PC-3 (cell line): ENCODE measurements at regions of chr12 and their contacts with region 1.

Region 1: GRCh38 chr12:76037130-76038103 is 5.8 kb upstream of the PHLDA1 start:
- DNase-seq: peak; percentile 85
- ATAC-seq: peak; percentile 51
- H3K4me3 ChIP-seq: peak overlapping the region; percentile 15; the same call in 1 of the 2 replicates
- H3K27ac ChIP-seq: peak overlapping the region; percentile 29
- H3K4me1 ChIP-seq: peaks cover 42% of the 10 kb centered on the region
- H3K27me3 ChIP-seq: no peaks in the 10 kb centered on the region
- CTCF ChIP-seq: peak; percentile 91

Region 2: DNA sequence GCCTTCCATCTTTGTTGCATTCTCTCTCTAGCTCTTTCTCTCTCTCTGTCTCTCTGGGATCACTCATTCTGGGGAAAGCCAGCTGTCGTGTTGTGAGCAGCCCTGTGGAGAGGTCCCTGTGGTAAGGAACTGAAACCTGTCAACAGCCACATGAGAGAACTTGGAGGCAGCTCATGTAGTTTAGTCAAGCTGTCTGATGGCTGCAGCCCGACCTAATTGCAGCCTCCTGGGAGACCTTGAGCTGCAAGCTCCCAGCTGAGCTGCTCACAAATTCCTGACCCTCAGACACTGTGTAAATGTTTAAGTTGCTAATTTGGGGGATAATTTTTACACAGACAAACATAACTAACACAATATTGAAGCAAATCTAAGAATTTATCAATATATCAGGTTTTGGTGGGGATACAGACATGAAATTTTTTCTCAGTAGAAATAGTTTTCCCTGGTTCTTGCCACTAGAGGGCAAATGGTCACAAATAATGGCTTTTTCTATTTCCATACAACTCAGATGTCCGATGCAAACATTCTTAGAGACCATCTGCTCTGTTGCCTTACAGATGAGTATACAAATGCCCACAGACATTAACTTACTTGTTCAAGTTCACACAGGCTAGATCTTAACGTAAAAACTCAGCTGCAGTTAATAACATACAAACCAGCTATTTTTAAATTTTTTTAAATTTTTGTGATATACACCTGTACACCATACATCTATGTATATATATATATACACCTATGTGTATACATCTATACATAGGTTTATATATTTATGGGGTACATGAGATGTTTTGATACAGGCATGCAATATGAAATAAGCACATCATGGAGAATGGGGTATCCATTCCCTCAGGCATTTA is 510.5 kb before region 1 on chr12:
- CTCF ChIA-PET with region 1: interaction called, 3 read pairs
- POLR2A ChIA-PET with region 1: no interaction called
- intact Hi-C with region 1: loop called (anchors 1 kb)
- DNase-seq: peak; percentile 75
- ATAC-seq: peak; percentile 76
- H3K4me3 ChIP-seq: no peak overlapping the region
- H3K27ac ChIP-seq: no peak overlapping the region
- H3K4me1 ChIP-seq: no peaks in the 10 kb centered on the region; the same call in 1 of the 2 replicates
- H3K27me3 ChIP-seq: no peaks in the 10 kb centered on the region
- CTCF ChIP-seq: peak; percentile 87

Region 3: GRCh38 chr12:75623631-75624118 is 413.7 kb before region 1 on chr12:
- CTCF ChIA-PET with region 1: no interaction called
- POLR2A ChIA-PET with region 1: no interaction called
- intact Hi-C with region 1: loop called (anchors 5 kb)
- DNase-seq: peak; percentile 54
- ATAC-seq: peak; percentile 84
- H3K4me3 ChIP-seq: no peak overlapping the region
- H3K27ac ChIP-seq: no peak overlapping the region
- H3K4me1 ChIP-seq: peaks cover 10% of the 10 kb centered on the region; the same call in 1 of the 2 replicates
- H3K27me3 ChIP-seq: no peaks in the 10 kb centered on the region
- CTCF ChIP-seq: peak; percentile 62

Region 4: GRCh38 chr12:75635606-75636410 is 401.6 kb before region 1 on chr12:
- CTCF ChIA-PET with region 1: no interaction called
- POLR2A ChIA-PET with region 1: interaction called, 3 read pairs
- intact Hi-C with region 1: loop called (anchors 5 kb)
- DNase-seq: peak; percentile 85
- ATAC-seq: peak; percentile 96
- H3K4me3 ChIP-seq: no peak overlapping the region
- H3K27ac ChIP-seq: peak overlapping the region; percentile 78
- H3K4me1 ChIP-seq: peaks cover 30% of the 10 kb centered on the region
- H3K27me3 ChIP-seq: no peaks in the 10 kb centered on the region
- CTCF ChIP-seq: no peak

Region 5: GRCh38 chr12:75722714-75723200 is 314.7 kb before region 1 on chr12:
- CTCF ChIA-PET with region 1: no interaction called
- POLR2A ChIA-PET with region 1: no interaction called
- intact Hi-C with region 1: loop called (anchors 5 kb)
- DNase-seq: peak; percentile 88
- ATAC-seq: peak; percentile 37
- H3K4me3 ChIP-seq: no peak overlapping the region
- H3K27ac ChIP-seq: peak overlapping the region; percentile 75
- H3K4me1 ChIP-seq: peaks cover 55% of the 10 kb centered on the region
- H3K27me3 ChIP-seq: no peaks in the 10 kb centered on the region
- CTCF ChIP-seq: no peak

Region 6: DNA sequence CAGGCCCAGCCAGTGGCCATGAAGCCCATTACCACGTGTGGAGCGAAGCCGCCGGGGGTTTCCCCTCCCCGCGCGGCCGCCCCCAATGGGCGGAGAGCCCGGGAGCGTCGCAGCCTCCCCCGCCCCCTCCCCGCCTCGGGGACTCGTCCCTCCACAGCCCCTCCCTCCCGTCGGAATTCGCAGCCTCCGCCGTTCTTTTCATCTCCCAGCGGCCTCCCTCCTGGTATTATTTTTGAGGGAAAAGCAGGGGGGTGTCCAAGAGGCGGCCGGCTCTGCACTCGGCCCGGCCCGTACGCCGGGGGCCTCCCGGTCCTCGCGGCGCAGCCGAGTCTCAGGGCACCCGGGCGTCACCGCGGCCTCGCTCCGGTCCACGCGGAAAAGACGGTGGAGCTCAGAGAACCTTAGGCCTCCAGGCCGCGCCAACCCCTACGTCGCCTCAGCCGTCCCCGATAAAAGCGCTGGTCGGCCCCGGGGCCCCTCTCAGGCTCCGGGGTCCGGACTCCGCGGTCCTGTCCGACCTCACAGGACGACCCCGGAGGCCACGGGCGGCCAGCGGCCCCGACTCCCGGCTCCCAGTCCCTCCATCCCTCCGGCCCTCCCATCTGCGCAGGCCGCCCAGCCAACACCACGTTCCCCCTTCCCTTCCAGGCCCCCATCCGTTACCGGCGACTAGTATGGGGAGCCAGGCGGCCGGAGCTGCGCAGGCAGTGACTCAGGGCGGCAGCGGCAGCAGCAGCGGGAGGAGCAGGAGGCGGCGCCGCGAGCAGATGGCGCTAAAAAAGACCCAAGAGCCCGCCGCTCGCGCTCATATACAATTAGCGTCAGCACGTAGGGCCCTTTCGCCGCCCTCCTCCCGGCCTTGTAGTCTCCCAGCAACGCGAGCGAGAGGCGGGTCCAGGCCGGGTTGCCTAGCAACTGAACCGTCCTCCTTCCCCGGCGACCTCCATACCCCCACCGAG is 46.8 kb after region 1 on chr12 and contains the start of gene NAP1L1:
- CTCF ChIA-PET with region 1: no interaction called
- POLR2A ChIA-PET with region 1: no interaction called
- intact Hi-C with region 1: loop called (anchors 5 kb)
- DNase-seq: peak; percentile 98
- ATAC-seq: peak; percentile 89
- H3K4me3 ChIP-seq: peak within 1 kb of the TSS; percentile 93
- H3K27ac ChIP-seq: peak within 1 kb of the TSS; percentile 76
- H3K4me1 ChIP-seq: peaks cover 31% of the 10 kb centered on the region
- H3K27me3 ChIP-seq: no peaks in the 10 kb centered on the region
- CTCF ChIP-seq: no peak
- total RNA-seq, gene NAP1L1: 200 and 247 TPM in 2 replicates

Region 7: DNA sequence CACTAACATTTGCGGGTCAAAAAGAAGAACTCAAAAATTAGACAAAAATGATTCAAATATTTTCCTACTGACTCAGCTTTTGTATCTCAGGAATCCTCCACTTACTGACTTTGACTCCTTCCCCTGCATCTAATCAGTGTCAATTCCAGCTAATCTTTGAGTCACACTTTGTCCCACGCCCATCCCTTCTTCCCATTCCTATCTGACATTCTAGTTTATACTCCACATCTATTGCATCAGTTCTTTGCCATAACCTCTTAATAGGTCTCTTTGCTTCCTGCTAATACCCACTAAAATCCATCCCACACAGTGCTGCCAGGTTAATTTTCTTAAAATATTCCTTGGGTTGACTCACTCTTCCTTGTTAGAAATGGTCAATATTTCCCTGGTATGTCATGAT is 291.7 kb after region 1 on chr12:
- CTCF ChIA-PET with region 1: no interaction called
- POLR2A ChIA-PET with region 1: no interaction called
- intact Hi-C with region 1: no loop called
- DNase-seq: peak; percentile 83
- ATAC-seq: peak; percentile 91
- H3K4me3 ChIP-seq: no peak overlapping the region
- H3K27ac ChIP-seq: peak overlapping the region; percentile 29; the same call in 1 of the 2 replicates
- H3K4me1 ChIP-seq: peaks cover 16% of the 10 kb centered on the region
- H3K27me3 ChIP-seq: no peaks in the 10 kb centered on the region
- CTCF ChIP-seq: no peak